CD4-positive, alpha-beta T cell (primary cell): ENCODE measurements at regions of chr16 and their contacts with region 1.

Region 1: GRCh38 chr16:3890091-3890490 is 9.6 kb upstream of the CREBBP start:
- DNase-seq: no peak
- ATAC-seq: no peak
- H3K4me3 ChIP-seq: no peak overlapping the region
- H3K4me3 Mint-ChIP-seq: no peak overlapping the region
- H3K27ac ChIP-seq: no peak overlapping the region
- H3K27ac Mint-ChIP-seq: no peak overlapping the region
- H3K4me1 ChIP-seq: no peaks in the 10 kb centered on the region
- H3K4me1 Mint-ChIP-seq: no peaks in the 10 kb centered on the region
- H3K27me3 ChIP-seq: peaks cover 0 to 4% of the 10 kb centered on the region in 2 experiments
- H3K27me3 Mint-ChIP-seq: peaks cover 11% of the 10 kb centered on the region
- CTCF ChIP-seq: no peak

Region 2: GRCh38 chr16:3793161-3793576 is 96.9 kb before region 1 on chr16:
- CTCF ChIA-PET with region 1: no interaction called
- POLR2A ChIA-PET with region 1: no interaction called
- intact Hi-C with region 1: no loop called
- DNase-seq: peak in 2 of 14 experiments; percentile 16 to 28
- ATAC-seq: peak; percentile 40
- H3K4me3 ChIP-seq: no peak overlapping the region
- H3K4me3 Mint-ChIP-seq: peak overlapping the region; percentile 20
- H3K27ac ChIP-seq: no peak overlapping the region
- H3K27ac Mint-ChIP-seq: peak overlapping the region; percentile 55
- H3K4me1 ChIP-seq: peaks cover 44% of the 10 kb centered on the region
- H3K4me1 Mint-ChIP-seq: peaks cover 83% of the 10 kb centered on the region
- H3K27me3 ChIP-seq: no peaks in the 10 kb centered on the region
- H3K27me3 Mint-ChIP-seq: no peaks in the 10 kb centered on the region
- CTCF ChIP-seq: no peak

Region 3: GRCh38 chr16:3865241-3865640 is 24.9 kb before region 1 on chr16:
- CTCF ChIA-PET with region 1: no interaction called
- POLR2A ChIA-PET with region 1: interaction called, 3 read pairs
- intact Hi-C with region 1: loop called in 1 of 2 experiments (anchors 2 kb)
- DNase-seq: no peak
- ATAC-seq: no peak
- H3K4me3 ChIP-seq: no peak overlapping the region
- H3K4me3 Mint-ChIP-seq: peak overlapping the region; percentile 2
- H3K27ac ChIP-seq: no peak overlapping the region
- H3K27ac Mint-ChIP-seq: peak overlapping the region; percentile 58
- H3K4me1 ChIP-seq: peaks cover 63% of the 10 kb centered on the region
- H3K4me1 Mint-ChIP-seq: peaks cover 97% of the 10 kb centered on the region
- H3K27me3 ChIP-seq: no peaks in the 10 kb centered on the region
- H3K27me3 Mint-ChIP-seq: no peaks in the 10 kb centered on the region
- CTCF ChIP-seq: no peak